Mammary epithelial cell (primary cell): ENCODE measurements at regions of chr9 and their contacts with region 1.

Region 1: GRCh38 chr9:114108016-114108833 is 9.1 kb upstream of the KIF12 start:
- DNase-seq: peak; percentile 70
- H3K4me3 ChIP-seq: no peak overlapping the region
- H3K27ac ChIP-seq: no peak overlapping the region
- H3K4me1 ChIP-seq: no peaks in the 10 kb centered on the region
- H3K27me3 ChIP-seq: no peaks in the 10 kb centered on the region
- CTCF ChIP-seq: peak; percentile 97 to 100

Region 2: GRCh38 chr9:114004221-114004716 is 104.0 kb before region 1 on chr9:
- CTCF ChIA-PET with region 1: no interaction called
- dilution Hi-C with region 1: no loop called
- in situ Hi-C with region 1: no loop called
- intact Hi-C with region 1: no loop called
- DNase-seq: no peak
- H3K4me3 ChIP-seq: no peak overlapping the region
- H3K27ac ChIP-seq: no peak overlapping the region
- H3K4me1 ChIP-seq: no peaks in the 10 kb centered on the region
- H3K27me3 ChIP-seq: no peaks in the 10 kb centered on the region
- CTCF ChIP-seq: no peak

Region 3: GRCh38 chr9:114053246-114054005 is 54.8 kb before region 1 on chr9:
- CTCF ChIA-PET with region 1: no interaction called
- dilution Hi-C with region 1: loop called (anchors 5 kb)
- in situ Hi-C with region 1: no loop called
- intact Hi-C with region 1: no loop called
- DNase-seq: no peak
- H3K4me3 ChIP-seq: no peak overlapping the region
- H3K27ac ChIP-seq: no peak overlapping the region
- H3K4me1 ChIP-seq: no peaks in the 10 kb centered on the region
- H3K27me3 ChIP-seq: no peaks in the 10 kb centered on the region
- CTCF ChIP-seq: no peak

Region 4: DNA sequence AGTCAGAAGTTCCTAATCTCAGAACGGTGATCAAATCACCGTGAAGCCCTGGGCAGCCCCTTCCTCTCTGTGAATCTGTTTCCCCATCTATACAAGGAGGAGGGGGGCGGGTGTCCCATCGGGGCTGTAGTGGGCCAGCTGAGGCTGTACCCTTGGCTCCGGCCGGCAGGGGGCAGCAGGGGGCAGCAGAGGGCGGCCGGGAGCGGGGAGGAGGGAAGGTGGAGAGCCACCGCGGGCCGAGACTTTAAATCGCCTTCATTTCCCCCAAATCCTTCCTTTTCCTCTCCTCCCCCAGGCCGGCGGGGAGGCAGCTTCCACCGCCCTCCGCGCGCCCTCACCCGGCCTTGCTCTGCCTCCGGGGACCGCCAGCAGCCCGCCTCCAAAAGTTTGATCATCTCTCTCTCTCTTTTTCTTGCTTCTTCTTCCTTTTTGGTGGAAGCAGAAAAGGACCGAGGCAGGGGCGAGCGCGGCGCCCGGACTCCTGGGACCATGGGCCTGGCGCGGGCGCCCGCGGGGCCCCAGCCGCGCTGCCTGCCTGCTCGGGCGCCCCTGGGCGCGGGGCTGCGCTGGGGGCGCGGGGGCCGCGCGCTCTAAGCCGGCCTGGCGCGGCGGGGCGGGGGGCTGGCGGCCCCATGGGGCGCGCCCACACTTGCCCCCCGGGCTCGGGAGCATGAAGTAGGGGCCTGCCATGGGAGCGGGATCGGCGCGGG is 47.2 kb after region 1 on chr9 and contains the start of gene COL27A1:
- CTCF ChIA-PET with region 1: interaction called, 11 read pairs
- dilution Hi-C with region 1: loop called (anchors 5 kb)
- in situ Hi-C with region 1: no loop called
- intact Hi-C with region 1: loop called (anchors 1 kb)
- DNase-seq: peak; percentile 65
- H3K4me3 ChIP-seq: peak within 1 kb of the TSS; percentile 74 to 84 (median 77)
- H3K27ac ChIP-seq: peak within 1 kb of the TSS; percentile 26
- H3K4me1 ChIP-seq: peaks cover 29% of the 10 kb centered on the region
- H3K27me3 ChIP-seq: peaks cover 12% of the 10 kb centered on the region
- CTCF ChIP-seq: peak; percentile 53 to 88
- total RNA-seq, gene COL27A1: 8.7 to 30.0 TPM

Region 5: GRCh38 chr9:114233491-114234185 is 125.4 kb after region 1 on chr9:
- CTCF ChIA-PET with region 1: no interaction called
- dilution Hi-C with region 1: no loop called
- in situ Hi-C with region 1: no loop called
- intact Hi-C with region 1: no loop called
- DNase-seq: no peak
- H3K4me3 ChIP-seq: no peak overlapping the region
- H3K27ac ChIP-seq: no peak overlapping the region
- H3K4me1 ChIP-seq: no peaks in the 10 kb centered on the region
- H3K27me3 ChIP-seq: no peaks in the 10 kb centered on the region
- CTCF ChIP-seq: no peak

Region 6: DNA sequence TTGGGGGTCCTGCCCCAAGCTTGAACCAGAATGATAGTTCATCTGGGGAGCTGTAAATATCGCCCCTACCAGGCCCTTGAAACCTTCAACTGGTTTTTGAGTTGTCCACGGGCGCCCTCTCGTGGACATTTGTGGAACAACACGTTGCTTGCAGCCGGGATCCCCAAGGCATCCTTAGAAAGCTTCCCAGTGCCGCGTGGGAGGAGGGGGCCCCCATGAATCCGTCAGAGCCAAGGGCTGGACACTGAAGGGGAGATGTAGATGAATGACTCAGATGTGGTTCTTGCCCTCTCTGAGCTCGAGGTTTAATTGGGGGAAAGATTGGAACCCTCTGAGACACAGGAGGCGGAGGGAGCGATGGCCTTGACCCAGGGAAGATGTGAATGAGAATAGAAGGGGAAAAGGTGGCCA is 182.8 kb after region 1 on chr9:
- CTCF ChIA-PET with region 1: interaction called, 7 read pairs
- dilution Hi-C with region 1: loop called (anchors 5 kb)
- in situ Hi-C with region 1: loop called (anchors 5 kb)
- intact Hi-C with region 1: loop called (anchors 1 kb)
- DNase-seq: peak; percentile 50
- H3K4me3 ChIP-seq: no peak overlapping the region
- H3K27ac ChIP-seq: no peak overlapping the region
- H3K4me1 ChIP-seq: peaks cover 20% of the 10 kb centered on the region
- H3K27me3 ChIP-seq: no peaks in the 10 kb centered on the region
- CTCF ChIP-seq: peak; percentile 82 to 84

Region 7: GRCh38 chr9:114505187-114506081 is 397.2 kb after region 1 on chr9 and contains the start of gene WHRN:
- CTCF ChIA-PET with region 1: no interaction called
- dilution Hi-C with region 1: no loop called
- in situ Hi-C with region 1: no loop called
- intact Hi-C with region 1: loop called (anchors 10 kb)
- DNase-seq: peak; percentile 88
- H3K4me3 ChIP-seq: peak within 1 kb of the TSS; percentile 64 to 79 (median 67)
- H3K27ac ChIP-seq: peak within 1 kb of the TSS; percentile 81
- H3K4me1 ChIP-seq: peaks cover 32% of the 10 kb centered on the region
- H3K27me3 ChIP-seq: no peaks in the 10 kb centered on the region
- CTCF ChIP-seq: no peak
- total RNA-seq, gene WHRN: 3.2 to 9.7 TPM